Esophagus muscularis mucosa (tissue), 4 donors: ENCODE measurements at regions of chrX and their contacts with region 1.

Region 1: GRCh38 chrX:14043209-14043608 is 13.5 kb upstream of the GEMIN8 start:
- DNase-seq: no peak
- H3K4me3 ChIP-seq: no peak overlapping the region
- H3K27ac ChIP-seq: no peak overlapping the region
- H3K4me1 ChIP-seq: no peaks in the 10 kb centered on the region
- H3K27me3 ChIP-seq: no peaks in the 10 kb centered on the region
- CTCF ChIP-seq: no peak
- EP300 ChIP-seq: no peak
- POLR2A ChIP-seq: no peak

Region 2: GRCh38 chrX:13906093-13906492 is 137.1 kb before region 1 on chrX:
- intact Hi-C with region 1: no loop called
- DNase-seq: no peak
- H3K4me3 ChIP-seq: no peak overlapping the region
- H3K27ac ChIP-seq: no peak overlapping the region
- H3K4me1 ChIP-seq: peaks cover 0 to 5% (median 2%) of the 10 kb centered on the region in 4 donors
- H3K27me3 ChIP-seq: no peaks in the 10 kb centered on the region
- CTCF ChIP-seq: no peak
- EP300 ChIP-seq: no peak
- POLR2A ChIP-seq: no peak

Region 3: DNA sequence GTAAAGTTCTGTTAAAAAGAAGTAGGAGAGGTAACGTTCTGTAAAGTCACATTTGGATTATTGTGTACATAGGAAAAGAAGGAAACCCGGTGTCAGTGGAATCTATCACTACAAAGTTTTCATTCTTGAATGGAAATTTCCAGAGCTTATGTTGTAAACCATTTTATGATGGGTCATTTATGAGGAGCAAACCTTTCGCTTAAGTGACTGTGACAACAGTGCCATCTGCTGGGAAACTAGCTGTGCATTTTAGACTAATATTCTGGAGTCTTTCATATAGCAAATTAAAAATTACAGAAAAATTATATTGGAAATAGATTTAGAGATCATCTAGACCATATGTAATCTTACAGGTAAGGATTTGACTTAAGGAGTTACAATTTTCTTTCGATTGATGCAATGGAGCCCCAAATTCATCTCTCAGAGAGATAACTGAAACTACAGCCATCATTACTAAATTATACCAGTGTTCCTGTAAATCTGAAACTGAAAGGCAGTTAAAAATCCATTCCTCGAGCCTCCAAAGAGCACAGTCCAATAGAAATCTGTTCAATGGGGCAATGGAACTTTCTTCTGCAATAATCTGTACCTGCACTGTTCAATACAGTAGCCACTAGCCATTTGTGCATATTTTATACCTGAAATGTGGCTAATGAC is 1199.8 kb after region 1 on chrX:
- intact Hi-C with region 1: loop called (anchors 5 kb)
- DNase-seq: no peak
- H3K4me3 ChIP-seq: no peak overlapping the region
- H3K27ac ChIP-seq: no peak overlapping the region
- H3K4me1 ChIP-seq: no peaks in the 10 kb centered on the region
- H3K27me3 ChIP-seq: no peaks in the 10 kb centered on the region
- CTCF ChIP-seq: peak; percentile 44 to 51 (median 46)
- EP300 ChIP-seq: no peak
- POLR2A ChIP-seq: no peak